ENCODE measurements at regions of chr12 and their contacts with region 1.

Region 1: GRCh38 chr12:122336015-122336946 is 70.0 kb upstream of the VPS33A start:
- DNase-seq: peak; percentile 76
- ATAC-seq: no peak
- H3K4me3 Mint-ChIP-seq: no peak overlapping the region
- H3K27ac Mint-ChIP-seq: peak overlapping the region; percentile 73
- H3K4me1 Mint-ChIP-seq: peaks cover 12% of the 10 kb centered on the region
- H3K27me3 Mint-ChIP-seq: no peaks in the 10 kb centered on the region

Region 2: DNA sequence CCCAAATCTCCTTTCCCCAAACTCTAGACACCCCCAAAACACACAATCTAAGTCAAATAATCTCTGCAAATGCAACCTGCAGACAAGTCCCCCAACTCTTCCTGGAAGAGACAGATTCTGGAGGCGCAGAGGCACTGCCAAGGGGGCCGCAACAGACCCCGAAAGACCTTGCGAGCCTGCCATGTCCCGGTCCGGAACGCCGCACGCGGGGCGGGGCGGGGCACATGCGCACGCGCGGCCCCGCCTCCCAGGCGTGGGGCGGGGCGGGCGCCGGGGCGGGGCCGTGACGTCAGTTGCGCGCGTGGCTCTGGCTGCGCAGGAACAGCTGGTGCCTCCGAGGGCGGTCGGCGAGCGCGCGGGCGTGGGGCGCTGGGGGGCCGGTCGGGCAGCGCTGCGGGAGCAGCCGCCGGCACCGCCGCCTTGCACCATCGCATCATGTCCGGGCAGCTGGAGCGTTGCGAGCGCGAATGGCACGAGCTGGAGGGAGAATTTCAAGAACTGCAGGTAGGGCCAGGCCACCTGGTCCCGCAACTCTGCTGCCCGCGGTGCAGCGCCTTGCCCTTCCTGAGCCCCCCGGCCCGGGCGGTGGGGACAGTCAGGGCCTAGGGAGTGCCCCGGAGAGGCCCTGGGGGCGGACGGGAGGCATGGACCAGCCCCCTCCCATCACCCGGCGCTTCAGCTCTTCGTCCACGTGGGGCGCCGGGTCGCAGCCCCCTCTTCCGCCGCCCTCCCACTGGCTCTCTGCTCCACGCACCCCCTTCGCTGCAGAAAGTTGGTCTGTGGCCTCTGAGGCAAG is 623.6 kb before region 1 on chr12 and contains the start of gene TMEM120B:
- CTCF ChIA-PET with region 1: no interaction called
- POLR2A ChIA-PET with region 1: no interaction called
- intact Hi-C with region 1: no loop called
- DNase-seq: peak; percentile 90
- ATAC-seq: peak; percentile 87
- H3K4me3 Mint-ChIP-seq: peak within 1 kb of the TSS; percentile 95
- H3K27ac Mint-ChIP-seq: peak within 1 kb of the TSS; percentile 91
- H3K4me1 Mint-ChIP-seq: peaks cover 16% of the 10 kb centered on the region
- H3K27me3 Mint-ChIP-seq: no peaks in the 10 kb centered on the region
- total RNA-seq, gene TMEM120B: 8.8 to 11.7 TPM

Region 3: GRCh38 chr12:122322501-122322900 is 13.8 kb before region 1 on chr12:
- CTCF ChIA-PET with region 1: interaction called, 20 read pairs
- POLR2A ChIA-PET with region 1: no interaction called
- intact Hi-C with region 1: no loop called
- DNase-seq: no peak
- ATAC-seq: no peak
- H3K4me3 Mint-ChIP-seq: no peak overlapping the region
- H3K27ac Mint-ChIP-seq: no peak overlapping the region
- H3K4me1 Mint-ChIP-seq: peaks cover 13% of the 10 kb centered on the region
- H3K27me3 Mint-ChIP-seq: no peaks in the 10 kb centered on the region

Region 4: DNA sequence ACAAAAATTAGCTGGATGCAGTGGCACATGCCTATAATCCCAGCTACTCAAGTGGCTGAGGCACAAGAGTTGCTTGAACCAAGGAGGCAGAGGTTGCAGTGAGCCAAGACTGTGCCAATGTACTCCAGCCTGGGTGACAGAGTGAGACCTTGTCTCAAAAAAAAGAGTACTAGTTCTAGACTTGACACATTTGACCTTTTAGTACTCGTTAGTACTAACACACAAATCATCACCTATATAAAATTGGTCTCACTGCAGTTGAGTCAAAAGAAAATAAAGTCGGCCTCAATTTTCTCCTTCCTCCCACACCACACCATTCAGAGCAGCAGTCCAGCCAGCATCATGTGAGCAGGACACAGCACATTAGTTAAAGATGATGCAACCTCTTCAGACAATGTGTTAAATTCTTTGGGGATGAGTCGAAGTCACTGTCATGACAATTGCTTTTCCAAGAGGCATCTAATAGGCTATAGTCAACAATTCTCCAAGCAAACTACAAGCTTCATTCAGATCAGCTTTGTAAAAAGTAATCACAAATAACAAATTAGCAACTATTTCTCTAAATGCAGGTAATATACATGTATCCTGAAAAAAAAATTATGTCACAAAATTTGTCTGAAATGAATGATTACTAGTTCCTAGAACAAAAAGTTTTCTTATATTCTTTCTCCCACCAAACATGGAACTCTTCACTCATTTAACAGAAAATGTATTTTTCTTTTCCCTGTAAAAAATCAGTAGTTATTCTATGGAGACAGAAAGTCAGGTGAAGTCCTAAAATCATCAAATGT is 30.6 kb after region 1 on chr12:
- CTCF ChIA-PET with region 1: no interaction called
- POLR2A ChIA-PET with region 1: no interaction called
- intact Hi-C with region 1: no loop called
- DNase-seq: peak; percentile 39
- ATAC-seq: peak; percentile 89
- H3K4me3 Mint-ChIP-seq: no peak overlapping the region
- H3K27ac Mint-ChIP-seq: peak overlapping the region; percentile 86
- H3K4me1 Mint-ChIP-seq: peaks cover 22% of the 10 kb centered on the region
- H3K27me3 Mint-ChIP-seq: no peaks in the 10 kb centered on the region

Measured in activated CD4-positive, alpha-beta T cell treated with anti-CD3 and anti-CD28 coated beads for 36 hours (primary cell).